ENCODE measurements at regions of chr3 and their contacts with region 1.

Region 1: DNA sequence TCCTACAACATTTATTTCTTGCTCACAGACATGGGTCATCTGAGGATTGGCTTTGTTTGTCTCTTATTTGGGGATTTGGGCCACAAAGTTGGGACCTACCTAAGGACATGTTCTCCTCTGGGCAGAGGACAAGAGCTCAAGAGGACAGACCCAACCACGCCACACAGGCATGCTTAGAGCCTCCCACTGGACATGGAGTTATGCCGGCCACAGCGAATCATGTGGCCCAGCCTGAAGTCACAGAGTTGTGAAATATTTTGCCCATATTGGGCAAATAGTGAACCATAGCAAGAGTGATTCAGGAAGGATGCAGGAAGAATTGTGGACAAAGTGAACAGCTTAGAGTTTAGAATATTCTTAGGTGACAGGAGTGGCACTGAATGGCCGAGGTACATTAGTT is 9.9 kb downstream of the TRAK1 start:
- DNase-seq: no peak
- ATAC-seq: no peak
- H3K4me3 ChIP-seq: no peak overlapping the region
- H3K4me3 Mint-ChIP-seq: no peak overlapping the region
- H3K27ac ChIP-seq: no peak overlapping the region
- H3K27ac Mint-ChIP-seq: no peak overlapping the region
- H3K4me1 ChIP-seq: peaks cover 4 to 23% of the 10 kb centered on the region in 2 donors
- H3K4me1 Mint-ChIP-seq: peaks cover 41% of the 10 kb centered on the region
- H3K27me3 ChIP-seq: no peaks in the 10 kb centered on the region
- H3K27me3 Mint-ChIP-seq: no peaks in the 10 kb centered on the region
- CTCF ChIP-seq: no peak

Region 2: GRCh38 chr3:41997702-41998550 is 103.1 kb before region 1 on chr3:
- CTCF ChIA-PET with region 1: interaction called, 18 read pairs
- POLR2A ChIA-PET with region 1: no interaction called
- intact Hi-C with region 1: no loop called
- DNase-seq: peak; percentile 34
- ATAC-seq: no peak
- H3K4me3 ChIP-seq: no peak overlapping the region
- H3K4me3 Mint-ChIP-seq: no peak overlapping the region
- H3K27ac ChIP-seq: no peak overlapping the region
- H3K27ac Mint-ChIP-seq: no peak overlapping the region
- H3K4me1 ChIP-seq: no peaks in the 10 kb centered on the region
- H3K4me1 Mint-ChIP-seq: peaks cover 5% of the 10 kb centered on the region
- H3K27me3 ChIP-seq: no peaks in the 10 kb centered on the region
- H3K27me3 Mint-ChIP-seq: no peaks in the 10 kb centered on the region
- CTCF ChIP-seq: peak; percentile 29

Region 3: DNA sequence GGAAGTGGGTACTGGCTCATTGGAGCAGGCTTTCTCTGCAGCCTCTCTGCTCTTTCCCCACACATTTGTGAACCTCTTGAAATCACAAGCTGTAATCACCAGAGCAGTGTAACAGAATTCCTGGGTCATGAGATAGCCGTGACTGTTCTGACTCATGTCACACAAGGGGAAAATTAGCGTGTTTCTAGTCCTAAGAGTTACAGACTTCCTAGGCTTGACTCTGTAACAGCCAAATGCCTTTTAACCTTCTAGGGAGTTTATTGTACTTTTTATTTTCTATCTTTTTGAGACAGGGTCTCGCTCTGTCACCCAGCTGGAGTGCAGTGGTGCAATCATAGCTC is 64.6 kb before region 1 on chr3:
- CTCF ChIA-PET with region 1: interaction called, 12 read pairs
- POLR2A ChIA-PET with region 1: no interaction called
- intact Hi-C with region 1: no loop called
- DNase-seq: no peak
- ATAC-seq: peak; percentile 37
- H3K4me3 ChIP-seq: no peak overlapping the region
- H3K4me3 Mint-ChIP-seq: peak overlapping the region; percentile 73
- H3K27ac ChIP-seq: peak overlapping the region; percentile 0 to 49
- H3K27ac Mint-ChIP-seq: peak overlapping the region; percentile 94
- H3K4me1 ChIP-seq: peaks cover 58 to 82% of the 10 kb centered on the region in 2 donors
- H3K4me1 Mint-ChIP-seq: peaks cover 82% of the 10 kb centered on the region
- H3K27me3 ChIP-seq: no peaks in the 10 kb centered on the region
- H3K27me3 Mint-ChIP-seq: no peaks in the 10 kb centered on the region
- CTCF ChIP-seq: no peak

Region 4: GRCh38 chr3:42071904-42072592 is 29.0 kb before region 1 on chr3:
- CTCF ChIA-PET with region 1: interaction called, 69 read pairs
- POLR2A ChIA-PET with region 1: interaction called, 3 read pairs
- intact Hi-C with region 1: loop called (anchors 2 kb)
- DNase-seq: peak; percentile 55
- ATAC-seq: peak; percentile 14
- H3K4me3 ChIP-seq: peak overlapping the region in 4 of 5 experiments; percentile 12 to 36 (median 30)
- H3K4me3 Mint-ChIP-seq: peak overlapping the region; percentile 78
- H3K27ac ChIP-seq: peak overlapping the region; percentile 51 to 80
- H3K27ac Mint-ChIP-seq: peak overlapping the region; percentile 82
- H3K4me1 ChIP-seq: peaks cover 66 to 79% of the 10 kb centered on the region in 2 donors
- H3K4me1 Mint-ChIP-seq: peaks cover 82% of the 10 kb centered on the region
- H3K27me3 ChIP-seq: no peaks in the 10 kb centered on the region
- H3K27me3 Mint-ChIP-seq: no peaks in the 10 kb centered on the region
- CTCF ChIP-seq: no peak

Region 5: DNA sequence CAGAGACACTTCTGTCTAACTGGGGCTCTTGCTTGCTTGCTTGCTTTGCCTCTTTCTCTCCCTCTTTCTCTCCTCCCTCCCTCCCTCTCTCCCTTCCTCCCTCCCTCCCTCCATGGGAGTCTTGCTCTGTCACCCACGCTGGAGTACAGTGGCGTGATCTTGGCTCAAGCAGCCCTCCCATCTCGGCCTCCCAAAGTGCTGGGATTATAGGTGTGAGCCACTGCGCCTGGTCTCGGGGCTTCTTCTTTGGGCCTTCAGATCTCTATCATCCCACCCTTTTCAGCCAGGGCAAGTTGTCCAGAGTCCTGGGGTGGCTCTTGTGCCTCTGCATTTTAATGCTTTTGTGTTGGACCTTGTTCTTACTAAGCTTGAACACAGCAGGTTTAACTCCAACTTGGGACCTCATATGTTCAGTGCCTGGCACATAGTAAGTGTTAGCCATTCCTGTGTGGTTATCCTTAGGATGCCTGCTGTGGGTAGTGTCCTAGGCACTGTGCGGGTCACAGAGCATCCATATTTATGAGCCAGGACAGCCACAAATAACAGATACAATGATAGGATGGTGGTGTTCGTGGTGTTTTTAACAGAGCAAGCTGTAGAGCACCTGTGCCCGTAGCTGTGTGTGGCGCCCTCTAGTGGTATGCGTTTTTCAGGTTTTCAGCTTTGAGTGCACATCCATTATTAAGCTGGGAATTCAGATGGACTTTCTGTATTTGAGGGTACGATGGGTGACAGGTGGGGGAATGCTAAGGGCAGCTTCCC is 89.8 kb after region 1 on chr3:
- CTCF ChIA-PET with region 1: interaction called, 49 read pairs
- POLR2A ChIA-PET with region 1: no interaction called
- intact Hi-C with region 1: no loop called
- DNase-seq: peak; percentile 81
- ATAC-seq: peak; percentile 66
- H3K4me3 ChIP-seq: no peak overlapping the region
- H3K4me3 Mint-ChIP-seq: no peak overlapping the region
- H3K27ac ChIP-seq: peak overlapping the region in 1 of 2 donors; percentile 43
- H3K27ac Mint-ChIP-seq: peak overlapping the region; percentile 65
- H3K4me1 ChIP-seq: peaks cover 15 to 29% of the 10 kb centered on the region in 2 donors
- H3K4me1 Mint-ChIP-seq: peaks cover 40% of the 10 kb centered on the region
- H3K27me3 ChIP-seq: no peaks in the 10 kb centered on the region
- H3K27me3 Mint-ChIP-seq: no peaks in the 10 kb centered on the region
- CTCF ChIP-seq: peak; percentile 89